Panc1 (cell line): ENCODE measurements at regions of chr20 and their contacts with region 1.

Region 1: DNA sequence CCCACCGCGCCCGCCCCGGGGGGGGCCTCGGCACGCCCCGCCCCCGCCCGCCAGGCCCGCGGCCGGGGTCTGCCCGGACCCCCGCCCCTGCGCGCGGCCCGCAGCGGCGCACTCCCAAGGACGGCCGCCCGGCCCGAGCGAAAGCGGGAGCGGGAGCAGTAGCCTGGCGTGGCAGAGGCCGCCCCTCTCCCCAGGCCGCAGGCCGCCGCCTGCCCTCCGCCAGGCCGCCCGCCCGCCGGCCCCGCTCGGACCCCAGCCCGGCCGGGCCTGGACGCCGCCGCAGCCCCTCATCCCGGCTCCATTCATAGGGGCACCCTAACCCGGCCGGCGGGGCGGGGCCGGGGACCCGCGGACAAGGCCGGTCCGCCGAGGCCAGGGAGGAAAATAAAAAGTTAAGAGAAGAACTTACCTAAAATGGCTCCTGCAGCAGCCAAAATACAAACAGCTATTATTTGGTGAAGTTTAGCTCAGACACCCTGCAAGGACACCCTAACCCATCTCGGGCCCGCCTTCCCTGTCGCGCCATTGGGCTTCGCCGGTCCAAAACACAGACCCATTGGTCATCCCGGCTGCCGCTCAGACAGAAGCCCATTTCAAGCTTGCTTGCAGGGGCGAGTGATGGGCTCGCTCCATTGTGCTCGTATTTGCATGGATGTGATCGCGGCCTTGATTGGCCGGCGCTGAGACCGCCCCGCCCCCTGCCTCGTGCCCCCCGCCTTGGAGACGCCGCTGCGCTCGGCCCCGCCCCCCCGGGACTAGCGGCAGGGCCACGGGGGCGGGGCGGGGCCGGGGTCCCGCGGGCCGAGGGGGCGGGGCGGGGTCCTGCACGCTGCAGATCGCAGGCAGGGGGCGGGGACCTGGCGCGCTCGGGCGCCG is at the start of gene CHD6:
- DNase-seq: peak; percentile 95
- ATAC-seq: peak; percentile 99
- H3K4me3 ChIP-seq: peak within 1 kb of the TSS; percentile 79 to 80
- H3K27ac ChIP-seq: peak within 1 kb of the TSS; percentile 83
- H3K4me1 ChIP-seq: peaks cover 29% of the 10 kb centered on the region
- H3K27me3 ChIP-seq: peaks cover 3% of the 10 kb centered on the region; the same call in 1 of the 2 replicates
- CTCF ChIP-seq: no peak
- total RNA-seq, gene CHD6: 21.3 TPM

Region 2: DNA sequence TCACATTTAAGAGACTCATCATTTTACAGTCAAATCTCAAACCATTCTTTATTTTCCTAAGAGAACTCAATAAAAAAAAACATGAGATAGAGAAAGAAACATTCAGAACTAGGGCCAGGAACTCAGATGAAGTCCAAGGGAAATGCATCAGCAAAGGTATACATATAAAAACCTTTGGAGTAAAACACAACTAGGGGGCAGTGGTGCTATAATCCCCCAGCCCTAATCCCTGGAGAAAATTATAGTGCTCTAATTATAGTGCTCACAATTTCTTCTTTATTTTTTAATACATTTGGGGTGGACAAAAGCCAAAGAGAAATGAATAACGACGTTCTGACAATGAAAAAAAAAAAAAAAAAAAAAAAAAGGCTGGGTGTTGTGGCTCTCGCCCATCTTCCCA is 150.9 kb before region 1 on chr20:
- CTCF ChIA-PET with region 1: interaction called, 11 read pairs
- POLR2A ChIA-PET with region 1: no interaction called
- in situ Hi-C with region 1: no loop called
- intact Hi-C with region 1: no loop called
- DNase-seq: no peak
- ATAC-seq: no peak
- H3K4me3 ChIP-seq: no peak overlapping the region
- H3K27ac ChIP-seq: no peak overlapping the region
- H3K4me1 ChIP-seq: no peaks in the 10 kb centered on the region
- H3K27me3 ChIP-seq: no peaks in the 10 kb centered on the region
- CTCF ChIP-seq: no peak; the same call in 1 of the 2 replicates